Activated CD4-positive, alpha-beta T cell treated with anti-CD3 and anti-CD28 coated beads for 36 hours (primary cell): ENCODE measurements at regions of chr16 and their contacts with region 1.

Region 1: GRCh38 chr16:67017810-67018488 is 11.0 kb upstream of the CBFB start:
- DNase-seq: peak; percentile 95
- ATAC-seq: peak; percentile 97
- H3K4me3 Mint-ChIP-seq: no peak overlapping the region
- H3K27ac Mint-ChIP-seq: no peak overlapping the region
- H3K4me1 Mint-ChIP-seq: peaks cover 17% of the 10 kb centered on the region
- H3K27me3 Mint-ChIP-seq: peaks cover 2% of the 10 kb centered on the region

Region 2: GRCh38 chr16:66988197-66988788 is 29.7 kb before region 1 on chr16 and contains the start of gene CES4A:
- CTCF ChIA-PET with region 1: interaction called, 16 read pairs
- POLR2A ChIA-PET with region 1: interaction called, 20 read pairs
- intact Hi-C with region 1: loop called in 1 of 2 experiments (anchors 2 kb)
- DNase-seq: peak; percentile 47
- ATAC-seq: no peak
- H3K4me3 Mint-ChIP-seq: peak within 1 kb of the TSS; percentile 1
- H3K27ac Mint-ChIP-seq: peak within 1 kb of the TSS; percentile 75
- H3K4me1 Mint-ChIP-seq: peaks cover 30% of the 10 kb centered on the region
- H3K27me3 Mint-ChIP-seq: no peaks in the 10 kb centered on the region
- total RNA-seq, gene CES4A: 13.5 to 15.7 TPM

Region 3: DNA sequence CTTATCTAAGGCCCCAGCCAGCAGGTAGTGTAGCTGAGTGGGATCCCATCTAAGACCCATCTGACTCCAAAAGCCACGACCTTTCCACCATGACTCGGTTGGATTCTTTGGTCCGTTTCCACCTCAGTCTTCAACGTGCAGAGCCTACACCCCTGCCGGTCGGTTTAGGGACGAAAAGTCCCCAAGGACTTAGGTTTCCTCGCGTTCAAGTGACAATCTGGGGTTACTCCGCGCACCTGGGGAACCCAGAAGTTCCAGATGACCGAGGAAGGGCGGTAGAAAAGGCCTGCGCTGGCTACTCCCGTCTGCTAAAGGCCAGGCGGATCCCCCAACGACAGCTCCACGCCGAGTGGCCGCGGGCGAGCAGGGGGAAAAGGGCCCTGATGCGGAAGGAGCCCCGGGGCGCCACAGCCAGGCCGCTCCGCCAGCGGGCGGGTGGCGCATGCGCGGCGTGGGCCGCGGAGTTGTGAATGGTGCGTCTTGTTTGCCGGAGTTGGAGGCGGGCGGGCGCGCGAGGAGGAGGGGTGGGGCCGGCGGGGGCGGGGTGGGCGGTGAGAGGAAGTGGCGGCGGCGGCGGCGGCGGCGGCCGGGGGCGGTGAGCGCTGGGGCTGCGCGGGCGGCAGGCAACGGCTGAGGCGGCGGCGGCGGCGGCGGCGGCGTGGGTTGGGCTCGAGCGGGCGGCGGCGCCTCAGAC is 10.8 kb after region 1 on chr16 and contains the start of gene CBFB:
- CTCF ChIA-PET with region 1: interaction called, 55 read pairs
- POLR2A ChIA-PET with region 1: interaction called, 8 read pairs
- intact Hi-C with region 1: no loop called
- DNase-seq: peak; percentile 95
- ATAC-seq: peak; percentile 90
- H3K4me3 Mint-ChIP-seq: peak within 1 kb of the TSS; percentile 87
- H3K27ac Mint-ChIP-seq: peak within 1 kb of the TSS; percentile 90
- H3K4me1 Mint-ChIP-seq: peaks cover 34% of the 10 kb centered on the region
- H3K27me3 Mint-ChIP-seq: no peaks in the 10 kb centered on the region
- total RNA-seq, gene CBFB: 84.6 to 90.2 TPM

Region 4: GRCh38 chr16:67109407-67110135 is 91.6 kb after region 1 on chr16 and contains the start of gene PHAF1:
- CTCF ChIA-PET with region 1: interaction called, 5 read pairs
- POLR2A ChIA-PET with region 1: no interaction called
- intact Hi-C with region 1: loop called in 1 of 2 experiments (anchors 2 kb)
- DNase-seq: peak; percentile 98
- ATAC-seq: peak; percentile 94
- H3K4me3 Mint-ChIP-seq: peak within 1 kb of the TSS; percentile 94
- H3K27ac Mint-ChIP-seq: peak within 1 kb of the TSS; percentile 85
- H3K4me1 Mint-ChIP-seq: peaks cover 24% of the 10 kb centered on the region
- H3K27me3 Mint-ChIP-seq: no peaks in the 10 kb centered on the region
- total RNA-seq, gene PHAF1: 12.7 to 14.0 TPM

Region 5: GRCh38 chr16:67173808-67174705 is 156.1 kb after region 1 on chr16:
- CTCF ChIA-PET with region 1: interaction called, 13 read pairs
- POLR2A ChIA-PET with region 1: no interaction called
- intact Hi-C with region 1: no loop called
- DNase-seq: peak; percentile 79
- ATAC-seq: peak; percentile 50
- H3K4me3 Mint-ChIP-seq: peak overlapping the region; percentile 68
- H3K27ac Mint-ChIP-seq: peak overlapping the region; percentile 53
- H3K4me1 Mint-ChIP-seq: peaks cover 36% of the 10 kb centered on the region
- H3K27me3 Mint-ChIP-seq: peaks cover 57% of the 10 kb centered on the region